ENCODE measurements at regions of chr2 and their contacts with region 1.

Region 1: GRCh38 chr2:101360229-101360628 is 27.1 kb downstream of the CREG2 start:
- DNase-seq: no peak
- ATAC-seq: no peak
- H3K4me3 ChIP-seq: no peak overlapping the region
- H3K27ac ChIP-seq: no peak overlapping the region
- H3K4me1 ChIP-seq: no peaks in the 10 kb centered on the region
- H3K27me3 ChIP-seq: 0 out of 2 replicates have a peak, but pooled peaks cover 3% of the 10 kb centered on the region
- CTCF ChIP-seq: no peak

Region 2: GRCh38 chr2:100984892-100985379 is 375.3 kb before region 1 on chr2:
- CTCF ChIA-PET with region 1: no interaction called
- POLR2A ChIA-PET with region 1: no interaction called
- in situ Hi-C with region 1: no loop called
- intact Hi-C with region 1: no loop called
- DNase-seq: no peak
- ATAC-seq: peak; percentile 82
- H3K4me3 ChIP-seq: no peak overlapping the region
- H3K27ac ChIP-seq: no peak overlapping the region
- H3K4me1 ChIP-seq: peaks cover 11% of the 10 kb centered on the region
- H3K27me3 ChIP-seq: no peaks in the 10 kb centered on the region
- CTCF ChIP-seq: peak; percentile 93

Region 3: DNA sequence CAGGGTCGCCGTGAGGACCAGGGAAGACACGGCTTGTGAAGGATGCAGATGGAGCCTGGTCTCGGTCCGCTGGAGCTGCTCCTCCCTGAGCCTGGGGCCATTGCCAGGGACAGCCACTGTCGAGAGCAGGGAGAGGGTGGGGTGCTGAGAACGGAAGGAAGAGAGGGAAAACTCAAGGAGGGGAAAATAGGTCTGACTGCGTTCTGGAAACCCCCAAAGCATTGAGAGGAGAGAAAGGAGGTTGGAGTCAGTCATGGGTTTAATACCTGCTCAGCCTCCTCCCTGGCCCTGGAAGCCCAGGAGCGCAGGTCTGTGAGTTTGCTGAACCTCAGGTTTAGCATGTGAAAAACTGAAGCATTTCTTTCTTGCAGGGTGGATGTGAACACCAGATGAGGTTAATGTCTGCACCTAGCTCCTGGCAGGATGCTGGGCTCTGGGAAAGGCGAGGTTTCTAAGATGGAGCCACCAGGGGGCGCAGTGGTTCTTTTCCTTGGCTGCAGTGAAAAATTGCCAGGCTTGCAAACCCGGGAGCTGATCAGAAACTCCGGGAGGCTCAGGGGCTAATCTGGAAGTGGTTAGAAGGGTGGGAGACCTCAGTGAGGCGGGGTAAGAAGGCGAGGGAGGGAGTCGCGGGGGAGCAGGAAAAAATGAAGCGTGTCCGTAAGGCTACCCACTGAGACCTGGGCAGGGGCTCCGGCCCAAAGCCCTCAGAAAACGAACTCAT is 18.2 kb before region 1 on chr2:
- CTCF ChIA-PET with region 1: interaction called, 11 read pairs
- POLR2A ChIA-PET with region 1: no interaction called
- in situ Hi-C with region 1: no loop called
- intact Hi-C with region 1: no loop called
- DNase-seq: peak; percentile 39
- ATAC-seq: peak; percentile 90
- H3K4me3 ChIP-seq: no peak overlapping the region
- H3K27ac ChIP-seq: no peak overlapping the region
- H3K4me1 ChIP-seq: no peaks in the 10 kb centered on the region; the same call in 1 of the 2 replicates
- H3K27me3 ChIP-seq: no peaks in the 10 kb centered on the region
- CTCF ChIP-seq: peak; percentile 92

Region 4: GRCh38 chr2:101759162-101759561 is 398.9 kb after region 1 on chr2:
- CTCF ChIA-PET with region 1: no interaction called
- POLR2A ChIA-PET with region 1: interaction called, 11 read pairs
- in situ Hi-C with region 1: no loop called
- intact Hi-C with region 1: no loop called
- DNase-seq: no peak
- ATAC-seq: peak; percentile 63
- H3K4me3 ChIP-seq: peak overlapping the region; percentile 7 to 38; a peak in 3 of 4 replicates
- H3K27ac ChIP-seq: peak overlapping the region; percentile 64
- H3K4me1 ChIP-seq: peaks cover 52% of the 10 kb centered on the region
- H3K27me3 ChIP-seq: no peaks in the 10 kb centered on the region
- CTCF ChIP-seq: no peak